Sigmoid colon (tissue), 7 donors: ENCODE measurements at regions of chr19 and their contacts with region 1.

Region 1: GRCh38 chr19:53879140-53880081 is 2.6 kb upstream of the PRKCG start:
- DNase-seq: peak; percentile 96
- H3K4me3 ChIP-seq: peak overlapping the region; percentile 23 to 47 (median 44)
- H3K27ac ChIP-seq: no peak overlapping the region
- H3K4me1 ChIP-seq: peaks cover 0 to 62% (median 53%) of the 10 kb centered on the region in 4 donors
- H3K27me3 ChIP-seq: peaks cover 26 to 50% (median 34%) of the 10 kb centered on the region in 3 donors
- CTCF ChIP-seq: no peak
- EP300 ChIP-seq: no peak
- POLR2A ChIP-seq: no peak

Region 2: DNA sequence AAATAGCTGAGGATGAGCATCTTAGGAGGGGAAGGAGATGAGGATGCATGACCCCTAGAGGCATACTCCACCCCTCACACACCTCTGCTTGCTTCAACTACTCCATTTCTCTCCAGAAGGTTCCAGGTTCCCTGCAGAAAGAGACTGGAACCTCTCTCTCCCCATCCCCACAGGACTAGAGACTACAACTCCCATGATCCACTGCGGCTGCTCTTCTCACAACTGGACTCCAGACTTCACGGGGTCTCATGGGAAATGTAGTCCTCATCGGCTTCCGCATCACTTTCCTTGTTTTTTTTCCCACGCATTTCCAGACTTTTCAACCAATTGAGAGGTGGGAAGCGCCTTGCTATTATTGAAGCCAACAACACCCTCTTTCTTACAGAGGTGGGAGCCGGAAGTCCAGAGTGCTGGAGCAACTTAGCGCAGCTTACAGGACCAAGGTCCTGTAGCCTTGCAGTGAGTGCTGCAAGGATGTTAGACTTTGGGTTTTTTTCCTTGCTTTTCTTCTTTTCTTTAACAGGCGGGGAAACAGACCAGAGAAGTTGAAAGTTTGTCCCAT is 98.1 kb after region 1 on chr19:
- intact Hi-C with region 1: loop called (anchors 5 kb)
- DNase-seq: peak; percentile 87
- H3K4me3 ChIP-seq: peak overlapping the region in 3 of 4 donors; percentile 13 to 38 (median 21)
- H3K27ac ChIP-seq: no peak overlapping the region
- H3K4me1 ChIP-seq: peaks cover 0 to 31% (median 24%) of the 10 kb centered on the region in 4 donors
- H3K27me3 ChIP-seq: peaks cover 36 to 77% (median 62%) of the 10 kb centered on the region in 3 donors
- CTCF ChIP-seq: no peak
- EP300 ChIP-seq: no peak
- POLR2A ChIP-seq: no peak